Naive thymus-derived CD8-positive, alpha-beta T cell (primary cell): ENCODE measurements at regions of chr1 and their contacts with region 1.

Region 1: GRCh38 chr1:154272217-154272998 is at the start of gene HAX1:
- DNase-seq: peak; percentile 80 to 98 (median 96)
- ATAC-seq: peak; percentile 90 to 91
- H3K4me3 Mint-ChIP-seq: peak within 1 kb of the TSS; percentile 94 to 99 (median 96)
- H3K27ac Mint-ChIP-seq: peak within 1 kb of the TSS; percentile 97 to 99 (median 99)
- H3K4me1 Mint-ChIP-seq: peaks cover 12 to 40% (median 37%) of the 10 kb centered on the region in 4 donors
- H3K27me3 Mint-ChIP-seq: no peaks in the 10 kb centered on the region
- polyA plus RNA-seq, gene HAX1: 165 to 170 (median 169) TPM

Region 2: DNA sequence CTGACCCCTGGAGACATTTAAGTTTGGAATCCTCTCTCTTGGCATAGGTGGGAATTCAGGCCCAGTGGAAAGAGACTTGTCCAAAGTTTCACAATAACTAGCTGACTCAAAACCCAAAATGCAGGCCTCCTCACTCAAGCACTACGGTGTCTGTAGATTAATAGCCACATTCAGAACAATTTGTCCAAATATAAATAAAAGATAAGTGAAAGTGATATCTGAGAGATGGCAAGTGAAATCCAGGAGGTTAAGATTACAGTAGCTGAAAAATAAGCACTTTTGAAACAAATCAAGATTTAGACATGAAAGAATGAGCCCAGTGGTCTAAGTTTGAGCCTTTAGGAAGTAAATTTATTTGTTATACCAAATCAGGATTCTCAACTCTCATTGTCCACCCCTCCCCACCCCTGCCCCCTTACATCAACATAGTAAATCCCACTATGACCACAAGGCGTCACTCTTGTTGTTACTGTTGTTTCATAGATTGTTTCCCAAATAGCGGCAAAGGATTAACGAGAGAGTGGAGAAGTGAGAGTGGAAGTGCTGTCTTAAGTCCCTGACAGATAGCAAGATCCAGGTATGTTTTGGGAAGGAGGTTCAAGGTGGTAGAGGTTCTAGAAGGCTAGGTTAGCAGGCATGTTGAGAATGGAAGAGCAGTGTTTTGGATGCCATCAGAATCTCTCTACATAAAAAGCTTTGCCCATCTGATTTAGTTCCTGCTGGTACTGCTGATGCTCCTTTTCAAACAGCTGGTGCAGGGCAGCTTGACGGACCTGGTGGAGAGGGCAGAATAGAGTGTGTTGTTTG is 73.4 kb before region 1 on chr1:
- POLR2A ChIA-PET with region 1: interaction called, 11 read pairs
- DNase-seq: peak in 9 of 10 donors; percentile 34 to 77 (median 55)
- ATAC-seq: peak; percentile 85 to 94
- H3K4me3 Mint-ChIP-seq: no peak overlapping the region
- H3K27ac Mint-ChIP-seq: peak overlapping the region in 2 of 10 donors; percentile 7 to 17
- H3K4me1 Mint-ChIP-seq: no peaks in the 10 kb centered on the region
- H3K27me3 Mint-ChIP-seq: peaks cover 0 to 6% (median 3%) of the 10 kb centered on the region in 5 donors

Region 3: GRCh38 chr1:154220071-154220969 is 52.1 kb before region 1 on chr1 and contains the start of gene UBAP2L:
- POLR2A ChIA-PET with region 1: interaction called, 26 read pairs
- DNase-seq: peak; percentile 93 to 99 (median 99)
- ATAC-seq: peak; percentile 87
- H3K4me3 Mint-ChIP-seq: peak within 1 kb of the TSS; percentile 83 to 99 (median 96)
- H3K27ac Mint-ChIP-seq: peak within 1 kb of the TSS; percentile 99 to 100 (median 100)
- H3K4me1 Mint-ChIP-seq: peaks cover 44 to 74% (median 74%) of the 10 kb centered on the region in 4 donors
- H3K27me3 Mint-ChIP-seq: peaks cover 0 to 2% (median 0%) of the 10 kb centered on the region in 5 donors
- polyA plus RNA-seq, gene UBAP2L: 42.0 to 70.5 (median 54.8) TPM

Region 4: DNA sequence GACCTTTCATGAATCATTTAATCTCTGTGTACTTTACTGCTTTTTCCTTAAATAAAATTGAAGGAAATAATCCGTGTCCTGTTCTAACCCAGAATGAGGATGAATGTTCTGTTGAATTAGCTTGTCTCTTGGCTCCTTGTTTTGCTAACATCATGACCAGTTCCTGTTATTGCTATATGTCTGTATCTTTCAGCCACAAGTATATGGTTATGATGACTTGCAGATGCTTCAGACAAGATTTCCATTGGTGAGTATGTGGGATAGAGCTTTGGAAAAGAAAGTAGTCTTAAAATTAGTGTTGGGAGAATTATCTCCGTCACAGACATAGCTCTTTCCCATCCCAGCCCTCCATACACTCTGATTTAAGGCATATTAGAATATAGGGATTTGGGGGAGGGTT is 13.6 kb before region 1 on chr1:
- POLR2A ChIA-PET with region 1: interaction called, 15 read pairs
- DNase-seq: no peak
- ATAC-seq: no peak
- H3K4me3 Mint-ChIP-seq: no peak overlapping the region
- H3K27ac Mint-ChIP-seq: peak overlapping the region in 6 of 10 donors; percentile 13 to 61 (median 38)
- H3K4me1 Mint-ChIP-seq: peaks cover 6 to 23% (median 9%) of the 10 kb centered on the region in 4 donors
- H3K27me3 Mint-ChIP-seq: no peaks in the 10 kb centered on the region

Region 5: DNA sequence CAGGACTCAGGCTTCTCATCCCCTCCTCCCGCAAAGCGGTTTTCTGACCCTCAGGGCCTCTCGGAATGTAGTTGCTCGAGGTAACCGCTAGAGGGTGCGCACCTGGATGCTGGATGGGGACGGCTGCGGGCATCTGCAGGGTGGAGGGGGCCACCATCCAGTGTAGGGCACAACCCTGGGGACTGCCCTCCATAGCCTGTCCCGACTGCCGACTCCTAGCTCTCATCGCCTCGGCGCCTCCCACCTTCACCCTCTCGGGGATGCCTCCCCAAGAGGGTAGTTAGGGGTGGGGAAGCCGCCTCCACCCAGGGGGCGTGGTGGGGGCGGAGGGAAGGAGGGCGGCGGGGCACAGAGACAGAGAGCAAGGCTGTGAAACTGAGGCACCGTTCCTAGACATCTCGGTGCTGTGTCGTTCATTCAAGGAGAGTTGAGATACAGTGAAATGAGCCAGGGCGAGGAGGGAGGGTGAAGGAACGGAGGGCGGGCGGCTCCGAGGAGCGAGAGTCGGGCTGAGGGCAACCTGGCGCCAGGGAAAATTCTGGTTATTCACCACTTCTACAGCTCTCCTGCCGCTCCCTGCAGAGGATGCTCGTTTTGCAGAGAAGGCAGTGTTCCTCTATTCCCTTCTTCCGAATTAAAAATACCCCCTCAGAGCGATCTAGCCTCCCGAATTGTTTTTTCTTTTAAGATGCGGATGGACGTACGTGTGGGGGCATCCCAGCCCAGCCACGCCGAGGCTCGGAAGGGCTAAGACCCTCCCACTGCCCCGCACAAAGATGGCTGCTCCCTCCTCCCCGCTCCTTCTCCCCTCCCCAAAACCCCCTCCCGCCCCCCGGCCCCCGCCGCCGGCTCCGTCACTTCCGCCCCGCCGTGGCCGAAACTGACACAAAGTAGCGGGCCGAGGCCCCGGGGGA is 52.5 kb after region 1 on chr1 and contains the start of gene ATP8B2:
- POLR2A ChIA-PET with region 1: interaction called, 23 read pairs
- DNase-seq: peak; percentile 72 to 91 (median 82)
- ATAC-seq: peak; percentile 48 to 54
- H3K4me3 Mint-ChIP-seq: peak within 1 kb of the TSS; percentile 86 to 99 (median 95)
- H3K27ac Mint-ChIP-seq: peak within 1 kb of the TSS; percentile 84 to 98 (median 94)
- H3K4me1 Mint-ChIP-seq: peaks cover 23 to 49% (median 46%) of the 10 kb centered on the region in 4 donors
- H3K27me3 Mint-ChIP-seq: peaks cover 0 to 3% (median 0%) of the 10 kb centered on the region in 5 donors
- polyA plus RNA-seq, gene ATP8B2: 48.5 to 65.1 (median 55.6) TPM